ENCODE measurements at regions of chr5 and their contacts with region 1.

Region 1: GRCh38 chr5:119411935-119412602 is 40.2 kb upstream of the HSD17B4 start:
- DNase-seq: peak; percentile 77
- H3K4me3 ChIP-seq: peak overlapping the region; percentile 23 to 27
- H3K27ac ChIP-seq: peak overlapping the region in 1 of 2 donors; percentile 20
- H3K4me1 ChIP-seq: no peaks in the 10 kb centered on the region
- H3K27me3 ChIP-seq: no peaks in the 10 kb centered on the region
- CTCF ChIP-seq: peak; percentile 92 to 95 (median 95)
- POLR2A ChIP-seq: no peak

Region 2: DNA sequence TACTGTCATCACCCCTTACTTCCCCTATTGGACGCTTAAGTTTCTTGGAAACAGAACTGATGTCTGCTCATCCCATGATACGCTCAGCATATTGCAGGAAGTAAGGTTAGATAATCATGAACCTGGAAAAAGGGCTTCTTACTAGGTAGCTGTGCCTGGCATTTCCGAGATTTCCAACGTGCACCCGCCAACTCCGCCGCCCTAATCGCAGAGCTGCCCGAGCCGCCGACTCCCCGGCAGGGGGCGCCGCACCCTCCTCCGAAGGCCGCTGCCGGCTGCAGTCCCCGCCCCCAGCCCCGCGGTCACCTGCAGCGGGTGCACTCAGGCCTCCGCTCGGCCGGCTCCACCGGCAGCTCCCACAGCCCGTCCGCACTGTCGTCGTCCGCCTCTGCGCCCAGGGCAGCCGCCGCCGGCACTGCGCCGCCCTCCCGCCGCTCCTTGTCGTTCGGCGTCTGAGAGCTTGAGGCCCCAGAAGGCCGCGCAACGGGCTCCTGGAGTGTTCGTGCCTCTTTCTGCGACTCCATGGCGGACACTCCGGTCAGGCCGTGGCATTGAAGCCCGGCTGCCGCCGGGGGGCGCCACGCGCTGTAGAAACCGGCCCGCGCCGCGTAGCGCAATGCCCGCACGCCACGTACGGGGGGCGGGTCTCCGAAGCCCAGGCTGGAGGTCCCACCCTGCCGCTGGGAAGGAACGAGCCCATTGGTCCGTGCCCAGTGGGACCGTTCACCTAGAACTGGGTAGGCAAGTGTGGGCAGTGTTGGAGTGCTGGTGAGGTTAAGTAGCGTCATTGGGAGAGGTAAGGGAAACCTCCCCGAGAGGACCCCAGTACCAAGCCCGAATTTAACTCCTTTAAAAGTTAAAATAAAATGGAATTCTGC is 423.8 kb before region 1 on chr5 and contains the start of gene DTWD2:
- intact Hi-C with region 1: loop called (anchors 5 kb)
- DNase-seq: peak; percentile 96
- H3K4me3 ChIP-seq: peak within 1 kb of the TSS; percentile 62 to 79
- H3K27ac ChIP-seq: peak within 1 kb of the TSS; percentile 94 to 96
- H3K4me1 ChIP-seq: peaks cover 13% of the 10 kb centered on the region
- H3K27me3 ChIP-seq: no peaks in the 10 kb centered on the region
- CTCF ChIP-seq: peak; percentile 74 to 94 (median 93)
- POLR2A ChIP-seq: no peak
- total RNA-seq, gene DTWD2: 15.8 to 19.7 TPM

Region 3: DNA sequence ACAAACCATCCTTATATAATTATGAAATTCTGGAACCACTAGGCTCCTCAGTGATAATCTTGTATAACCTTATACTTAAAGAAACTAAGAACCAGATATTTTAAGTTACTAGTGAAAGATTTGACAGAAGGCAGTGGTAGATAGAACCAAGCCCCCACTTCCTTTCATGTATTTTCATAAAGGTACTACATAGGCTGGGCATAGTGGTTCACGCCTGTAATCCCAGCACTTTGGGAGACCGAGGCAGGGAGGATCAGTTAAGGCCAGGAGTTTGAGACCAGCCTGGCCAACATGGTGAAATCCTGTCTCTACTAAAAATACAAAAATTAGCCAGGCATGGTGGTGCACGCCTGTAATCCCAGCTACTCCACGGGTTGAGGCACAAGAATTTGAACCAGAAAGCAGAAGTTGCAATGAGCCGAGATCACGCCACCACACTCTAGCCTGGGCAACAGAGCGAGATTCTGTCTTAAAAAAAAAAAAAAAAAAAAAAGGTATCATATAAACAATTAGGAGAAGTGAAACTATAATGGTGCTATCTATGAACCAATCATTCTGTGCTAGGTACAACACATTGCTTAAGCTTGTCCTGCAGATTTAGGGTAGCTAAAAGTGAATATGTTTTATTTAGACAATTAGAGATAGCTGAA is 395.8 kb before region 1 on chr5:
- intact Hi-C with region 1: loop called (anchors 10 kb)
- DNase-seq: no peak
- H3K4me3 ChIP-seq: no peak overlapping the region
- H3K27ac ChIP-seq: no peak overlapping the region
- H3K4me1 ChIP-seq: no peaks in the 10 kb centered on the region
- H3K27me3 ChIP-seq: no peaks in the 10 kb centered on the region
- CTCF ChIP-seq: no peak
- POLR2A ChIP-seq: no peak

Measured in testis (tissue), 5 donors.